SK-N-SH (cell line): ENCODE measurements at regions of chr11 and their contacts with region 1.

Region 1: DNA sequence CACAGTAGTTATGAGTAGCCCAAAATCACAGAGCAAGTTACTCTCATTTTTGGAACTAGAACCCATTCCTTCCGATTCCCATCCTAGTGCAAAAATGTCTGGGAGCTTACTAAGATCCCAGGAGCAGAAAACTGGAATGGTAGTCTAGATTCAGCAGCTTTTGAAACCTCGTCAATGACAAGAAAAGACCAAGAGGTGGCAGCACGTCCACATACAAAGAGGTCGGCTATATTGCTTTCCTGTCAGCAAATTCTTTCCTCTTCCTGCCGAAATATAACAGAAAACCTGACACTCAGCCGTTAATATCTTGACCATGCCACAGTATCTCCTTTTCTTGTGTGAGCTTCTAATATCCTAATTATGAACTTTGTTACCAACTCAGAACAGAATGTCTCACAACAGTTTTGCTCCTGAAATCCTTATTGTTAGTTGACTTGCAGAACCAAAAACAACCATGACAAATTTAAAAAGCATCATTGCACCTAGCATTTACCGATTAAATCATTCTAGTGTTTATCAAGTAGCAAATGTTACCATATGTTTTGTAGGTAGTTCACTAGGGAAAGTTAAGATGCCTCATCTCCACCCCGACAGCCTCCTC is 92.8 kb upstream of the OR9G4 start:
- DNase-seq: peak; percentile 60
- H3K4me3 ChIP-seq: no peak overlapping the region; a peak in 1 of 4 replicates
- H3K27ac ChIP-seq: peak overlapping the region in 1 of 2 experiments; percentile 94; a peak in 2 of 4 replicates
- H3K4me1 ChIP-seq: peaks cover 0 to 4% of the 10 kb centered on the region in 2 experiments; a peak in 2 of 4 replicates
- H3K27me3 ChIP-seq: no peaks in the 10 kb centered on the region
- CTCF ChIP-seq: peak; percentile 79
- EP300 ChIP-seq: no peak
- RAD21 ChIP-seq: peak; percentile 96

Region 2: DNA sequence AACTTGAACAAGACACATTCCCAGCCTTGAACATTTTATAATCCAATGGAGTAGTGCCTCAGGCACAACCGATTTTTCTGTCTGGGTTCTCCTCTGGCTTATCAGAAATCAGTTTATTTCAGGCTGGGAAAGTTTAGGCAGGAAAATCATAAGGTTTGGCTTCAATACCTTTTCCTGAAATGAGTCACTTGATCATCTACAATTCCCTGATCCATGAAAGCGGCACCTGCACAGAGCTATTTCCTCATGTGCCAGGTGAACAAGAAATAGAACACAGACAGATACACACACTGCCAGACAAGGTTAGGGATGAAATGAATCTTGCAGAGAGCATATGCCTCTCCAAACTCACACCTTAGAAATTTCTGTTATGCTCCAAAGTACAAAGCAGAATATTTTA is 13.9 kb after region 1 on chr11:
- CTCF ChIA-PET with region 1: interaction called, 35 read pairs
- POLR2A ChIA-PET with region 1: no interaction called
- DNase-seq: no peak
- H3K4me3 ChIP-seq: no peak overlapping the region
- H3K27ac ChIP-seq: no peak overlapping the region
- H3K4me1 ChIP-seq: no peaks in the 10 kb centered on the region; a peak in 1 of 4 replicates
- H3K27me3 ChIP-seq: no peaks in the 10 kb centered on the region
- CTCF ChIP-seq: no peak
- EP300 ChIP-seq: no peak
- RAD21 ChIP-seq: no peak

Region 3: DNA sequence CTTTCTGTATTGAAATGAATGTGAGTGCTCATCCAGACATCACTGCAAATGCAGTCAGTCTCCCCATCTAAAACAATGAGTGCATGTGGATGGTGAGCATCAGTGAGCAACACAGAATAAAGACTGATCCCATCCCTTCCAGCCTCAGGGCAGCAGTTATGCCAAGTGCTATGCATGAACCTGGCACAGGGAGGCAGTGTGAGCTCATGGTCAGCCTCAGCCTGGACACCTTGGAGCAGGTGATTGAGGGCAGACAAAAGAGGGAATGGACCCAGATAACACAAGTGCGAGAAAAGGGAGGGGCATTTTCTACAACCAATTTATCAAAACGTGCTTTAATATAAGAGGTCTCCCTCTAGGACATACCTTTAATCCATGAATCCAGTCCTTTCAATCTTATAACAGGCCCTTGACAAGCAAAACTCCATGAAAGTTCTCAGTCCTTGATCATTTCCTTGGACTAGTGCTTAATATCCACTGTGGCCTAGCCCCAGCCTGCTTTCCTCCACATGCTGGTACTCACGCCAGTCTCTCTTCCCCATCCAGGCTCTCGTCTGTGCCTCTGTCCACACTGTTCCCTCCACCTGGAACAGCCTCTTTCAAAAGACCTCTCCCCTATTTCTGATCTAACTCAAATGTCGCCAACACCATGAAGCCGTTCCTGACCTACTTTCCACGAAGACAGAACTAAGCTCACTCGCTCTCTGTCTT is 289.9 kb after region 1 on chr11:
- CTCF ChIA-PET with region 1: interaction called, 18 read pairs
- POLR2A ChIA-PET with region 1: no interaction called
- DNase-seq: peak; percentile 25
- H3K4me3 ChIP-seq: peak overlapping the region in 1 of 2 experiments; percentile 54; a peak in 1 of 4 replicates
- H3K27ac ChIP-seq: peak overlapping the region in 1 of 2 experiments; percentile 39; a peak in 1 of 4 replicates
- H3K4me1 ChIP-seq: peaks cover 0 to 3% of the 10 kb centered on the region in 2 experiments; a peak in 1 of 4 replicates
- H3K27me3 ChIP-seq: no peaks in the 10 kb centered on the region
- CTCF ChIP-seq: peak; percentile 52
- EP300 ChIP-seq: no peak
- RAD21 ChIP-seq: peak; percentile 88

Region 4: DNA sequence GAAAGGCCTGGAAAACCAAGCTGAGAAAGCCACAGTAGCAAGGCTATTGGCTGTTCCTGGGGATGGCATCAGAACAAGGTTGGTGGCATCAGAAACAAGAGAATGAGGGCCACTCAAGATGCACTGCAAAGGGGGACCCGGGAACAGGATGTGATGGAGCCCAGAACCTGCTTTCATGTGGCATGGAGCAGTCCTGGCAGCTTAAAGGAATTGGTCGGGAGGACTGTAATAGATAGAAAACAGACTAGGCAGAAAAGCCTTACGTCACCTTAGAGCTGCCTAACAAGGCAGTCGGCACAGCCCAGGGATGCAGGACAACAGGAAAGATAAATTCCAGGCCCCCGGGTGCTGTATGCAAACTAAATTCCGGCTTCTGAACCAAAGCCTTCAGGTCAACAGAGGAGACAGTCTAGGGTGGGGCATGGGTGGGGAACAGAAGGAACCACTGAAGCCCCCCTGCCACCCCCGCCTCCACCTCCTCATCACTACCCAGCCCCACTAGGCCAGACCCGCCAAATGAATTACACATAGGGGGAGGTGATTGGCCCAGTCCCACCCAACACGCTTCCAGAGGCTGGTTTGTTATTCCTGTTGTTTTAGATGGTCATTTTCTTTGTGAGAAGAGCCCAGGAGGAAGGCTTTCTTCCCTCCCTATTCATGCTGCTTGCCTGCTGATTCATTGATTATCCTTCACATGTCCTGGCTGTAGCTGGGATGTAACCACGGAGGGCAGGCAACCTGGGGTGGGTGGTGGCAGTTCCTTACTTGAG is 314.7 kb after region 1 on chr11:
- CTCF ChIA-PET with region 1: interaction called, 12 read pairs
- POLR2A ChIA-PET with region 1: no interaction called
- DNase-seq: peak; percentile 44
- H3K4me3 ChIP-seq: no peak overlapping the region
- H3K27ac ChIP-seq: peak overlapping the region in 1 of 2 experiments; percentile 99; a peak in 2 of 4 replicates
- H3K4me1 ChIP-seq: peaks cover 0 to 49% of the 10 kb centered on the region in 2 experiments; a peak in 2 of 4 replicates
- H3K27me3 ChIP-seq: no peaks in the 10 kb centered on the region
- CTCF ChIP-seq: no peak
- EP300 ChIP-seq: peak in 1 of 2 experiments; percentile 78; a peak in 2 of 4 replicates
- RAD21 ChIP-seq: no peak

Region 5: DNA sequence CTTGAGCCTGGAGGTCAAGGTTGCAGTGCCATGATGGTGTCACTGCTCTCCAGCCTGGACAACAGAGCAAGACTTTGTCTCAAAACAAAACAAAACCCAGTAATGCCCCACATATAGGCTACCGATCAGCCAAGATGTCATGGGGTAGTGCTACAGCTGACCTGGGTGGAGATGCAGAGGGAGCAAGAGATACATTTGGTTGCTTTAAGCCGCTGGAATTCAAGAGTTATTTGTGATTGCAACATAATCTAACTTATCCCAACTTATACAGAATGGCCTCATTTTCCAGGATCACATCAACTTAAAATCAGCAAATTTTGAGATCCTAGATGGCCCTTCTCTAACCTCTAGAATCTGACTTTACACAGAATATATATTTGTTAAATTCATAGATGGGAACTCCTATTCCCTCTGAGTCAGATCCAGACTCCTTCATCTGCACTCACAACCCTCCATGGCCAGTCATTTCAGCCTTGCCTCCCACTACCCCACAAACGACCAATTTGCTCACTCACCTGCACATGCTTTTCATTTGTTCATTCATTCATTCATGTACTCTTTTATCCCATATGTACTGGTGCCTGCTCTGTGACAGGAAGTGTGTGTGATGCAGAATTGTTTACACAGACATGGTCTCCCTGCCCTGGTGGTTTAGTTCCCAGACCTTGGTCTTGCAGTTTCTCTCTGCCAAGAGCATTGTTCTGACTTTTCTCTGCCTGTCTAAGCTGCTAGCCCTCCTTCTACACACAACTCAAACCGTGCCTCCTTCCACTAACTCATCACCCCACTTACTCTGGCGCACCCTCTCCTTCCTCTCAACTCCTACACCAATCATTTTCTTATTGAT is 419.9 kb after region 1 on chr11:
- CTCF ChIA-PET with region 1: interaction called, 10 read pairs
- POLR2A ChIA-PET with region 1: no interaction called
- DNase-seq: no peak
- H3K4me3 ChIP-seq: no peak overlapping the region
- H3K27ac ChIP-seq: no peak overlapping the region
- H3K4me1 ChIP-seq: no peaks in the 10 kb centered on the region
- H3K27me3 ChIP-seq: no peaks in the 10 kb centered on the region
- CTCF ChIP-seq: no peak
- EP300 ChIP-seq: no peak
- RAD21 ChIP-seq: no peak